Naive thymus-derived CD4-positive, alpha-beta T cell (primary cell): ENCODE measurements at regions of chr15 and their contacts with region 1.

Region 1: GRCh38 chr15:31241888-31242522 is 84.6 kb upstream of the KLF13 start:
- DNase-seq: peak in 5 of 9 donors; percentile 47 to 78 (median 65)
- ATAC-seq: peak; percentile 95
- H3K4me3 ChIP-seq: no peak overlapping the region
- H3K4me3 Mint-ChIP-seq: peak overlapping the region; percentile 2 to 74 (median 50)
- H3K27ac ChIP-seq: peak overlapping the region; percentile 32
- H3K27ac Mint-ChIP-seq: peak overlapping the region; percentile 36 to 97 (median 90)
- H3K4me1 ChIP-seq: peaks cover 13 to 28% of the 10 kb centered on the region in 2 donors
- H3K4me1 Mint-ChIP-seq: peaks cover 34 to 49% (median 42%) of the 10 kb centered on the region in 7 donors
- H3K27me3 ChIP-seq: no peaks in the 10 kb centered on the region
- H3K27me3 Mint-ChIP-seq: peaks cover 0 to 3% (median 0%) of the 10 kb centered on the region in 5 donors

Region 2: GRCh38 chr15:31206386-31206785 is 35.6 kb before region 1 on chr15:
- CTCF ChIA-PET with region 1: no interaction called
- POLR2A ChIA-PET with region 1: interaction called, 3 read pairs
- intact Hi-C with region 1: loop called in 1 of 2 experiments (anchors 5 kb)
- DNase-seq: no peak
- ATAC-seq: no peak
- H3K4me3 ChIP-seq: no peak overlapping the region
- H3K4me3 Mint-ChIP-seq: no peak overlapping the region
- H3K27ac ChIP-seq: no peak overlapping the region
- H3K27ac Mint-ChIP-seq: peak overlapping the region in 1 of 9 donors; percentile 4
- H3K4me1 ChIP-seq: peaks cover 13 to 46% of the 10 kb centered on the region in 2 donors
- H3K4me1 Mint-ChIP-seq: peaks cover 10 to 53% (median 46%) of the 10 kb centered on the region in 7 donors
- H3K27me3 ChIP-seq: no peaks in the 10 kb centered on the region
- H3K27me3 Mint-ChIP-seq: peaks cover 0 to 12% (median 0%) of the 10 kb centered on the region in 5 donors

Region 3: DNA sequence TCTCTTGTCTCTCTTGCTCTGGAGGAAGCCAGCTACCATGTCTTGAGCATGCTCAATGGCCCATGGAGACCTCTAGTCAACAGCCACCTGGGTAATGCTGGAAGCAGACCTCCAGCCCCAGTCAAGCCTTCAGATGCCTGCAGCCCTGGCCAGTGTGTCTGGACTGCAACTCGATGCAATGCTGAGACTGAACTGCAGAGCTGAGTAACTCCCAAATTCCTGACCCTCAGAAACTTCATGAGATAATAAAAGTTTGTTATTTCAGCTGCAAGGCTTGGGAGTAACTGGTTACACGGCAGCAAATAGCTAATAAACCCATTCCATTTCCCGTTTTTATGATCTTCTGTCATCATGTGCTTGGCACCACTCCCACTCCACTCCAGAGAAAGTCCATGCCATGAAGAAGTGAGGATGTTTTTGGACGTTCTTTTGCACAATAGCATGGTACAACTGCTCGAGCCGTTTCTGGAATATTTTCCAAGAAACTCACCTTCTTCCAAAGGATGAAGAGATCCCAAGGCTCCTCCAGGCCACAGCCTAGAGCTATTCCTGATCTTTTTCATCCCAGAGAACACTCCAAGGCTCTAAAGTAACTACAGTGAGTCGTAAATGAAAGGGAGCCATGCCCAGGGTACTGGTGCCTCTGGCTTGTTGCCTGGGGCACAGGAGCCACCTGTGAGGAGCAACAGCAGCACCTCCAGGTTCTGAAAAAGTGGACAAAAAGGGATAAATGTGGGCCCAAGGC is 12.6 kb after region 1 on chr15:
- CTCF ChIA-PET with region 1: interaction called, 3 read pairs
- POLR2A ChIA-PET with region 1: interaction called, 10 read pairs
- intact Hi-C with region 1: no loop called
- DNase-seq: no peak
- ATAC-seq: no peak
- H3K4me3 ChIP-seq: no peak overlapping the region
- H3K4me3 Mint-ChIP-seq: no peak overlapping the region
- H3K27ac ChIP-seq: no peak overlapping the region
- H3K27ac Mint-ChIP-seq: peak overlapping the region in 4 of 9 donors; percentile 6 to 70 (median 60)
- H3K4me1 ChIP-seq: peaks cover 8 to 14% of the 10 kb centered on the region in 2 donors
- H3K4me1 Mint-ChIP-seq: peaks cover 26 to 48% (median 34%) of the 10 kb centered on the region in 7 donors
- H3K27me3 ChIP-seq: no peaks in the 10 kb centered on the region
- H3K27me3 Mint-ChIP-seq: peaks cover 0 to 20% (median 0%) of the 10 kb centered on the region in 5 donors